Transverse colon (tissue), 4 donors: ENCODE measurements at regions of chr20 and their contacts with region 1.

Region 1: DNA sequence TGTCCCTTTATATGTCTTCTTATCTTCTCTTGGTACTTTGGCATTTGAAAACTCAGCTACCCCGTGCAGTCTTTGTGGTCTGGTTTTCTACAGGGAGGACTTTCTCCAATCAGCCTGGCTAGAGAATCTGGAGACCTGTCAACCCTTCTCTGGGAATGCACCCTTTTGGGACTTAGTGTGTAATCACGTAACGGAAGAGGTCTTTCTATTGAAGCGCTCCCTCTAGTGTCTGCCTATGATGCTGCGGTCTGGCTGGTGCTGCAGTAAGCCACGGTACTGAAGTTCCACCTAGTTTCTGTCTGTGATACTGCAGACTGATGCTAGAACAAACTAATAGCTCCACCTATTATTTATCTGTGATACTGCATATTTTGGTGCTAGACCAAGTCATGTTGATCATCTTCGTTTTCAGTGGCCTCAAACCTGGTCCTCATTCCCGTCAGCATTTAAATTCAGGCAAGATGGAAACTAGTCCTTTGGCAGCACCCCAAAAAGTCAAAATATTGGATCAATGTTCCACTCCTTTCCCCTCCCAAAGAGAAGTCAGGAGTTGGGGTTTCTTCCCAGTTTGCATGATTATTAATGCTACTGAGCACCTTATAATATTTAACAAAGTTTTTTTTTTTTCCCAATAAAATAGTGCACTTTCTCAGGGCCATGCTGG is 12.5 kb upstream of the SIRPB2 start:
- DNase-seq: peak; percentile 77
- H3K4me3 ChIP-seq: no peak overlapping the region
- H3K27ac ChIP-seq: no peak overlapping the region
- H3K4me1 ChIP-seq: no peaks in the 10 kb centered on the region
- H3K27me3 ChIP-seq: peaks cover 9% of the 10 kb centered on the region
- CTCF ChIP-seq: peak; percentile 68 to 91 (median 82)
- EP300 ChIP-seq: no peak
- POLR2A ChIP-seq: no peak

Region 2: DNA sequence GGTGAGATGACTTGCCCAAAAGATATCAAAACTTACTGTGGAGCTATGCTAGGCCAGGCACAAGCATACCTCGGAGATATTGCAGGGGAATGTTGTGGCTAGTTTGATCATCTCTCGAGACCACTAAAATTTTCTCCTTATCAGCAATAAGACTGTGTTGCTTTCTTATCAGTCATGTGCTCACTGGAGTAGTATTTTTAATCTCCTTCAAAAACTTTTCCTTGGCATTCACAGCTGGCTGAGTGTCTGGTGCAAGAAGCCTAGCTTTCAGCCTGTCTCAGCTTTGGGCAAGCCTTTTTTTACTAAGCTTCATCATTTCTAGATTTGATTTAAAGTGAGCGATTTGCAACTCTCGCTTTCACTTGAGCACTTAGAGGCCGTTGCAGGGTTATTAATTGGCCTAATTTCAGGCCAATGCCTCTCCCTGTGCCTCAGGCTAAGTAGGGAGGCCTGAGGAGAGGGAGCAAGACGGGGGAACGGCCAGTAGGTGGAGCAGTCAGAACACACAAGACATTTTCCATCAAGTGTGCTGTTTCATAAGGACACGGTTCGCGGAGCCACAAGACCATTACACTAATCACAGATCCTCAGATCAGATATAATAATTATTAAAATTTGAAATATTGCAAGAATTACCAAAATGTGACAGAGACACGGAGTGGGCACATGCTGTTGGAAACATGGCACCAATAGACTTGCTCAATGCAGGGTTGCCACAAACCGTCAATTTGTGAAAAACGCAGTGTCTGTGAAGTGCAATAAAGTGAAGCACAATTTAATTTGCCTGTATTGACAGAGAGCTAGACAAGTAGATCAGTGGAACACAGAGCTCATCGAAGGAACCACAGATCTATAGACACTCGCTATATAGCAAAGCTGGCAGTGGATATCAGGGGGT is 260.7 kb after region 1 on chr20:
- in situ Hi-C with region 1: loop called in 1 of 4 experiments (anchors 25 kb)
- intact Hi-C with region 1: no loop called
- DNase-seq: peak; percentile 80
- H3K4me3 ChIP-seq: no peak overlapping the region
- H3K27ac ChIP-seq: no peak overlapping the region
- H3K4me1 ChIP-seq: peaks cover 0 to 3% (median 0%) of the 10 kb centered on the region in 4 donors
- H3K27me3 ChIP-seq: peaks cover 6% of the 10 kb centered on the region
- CTCF ChIP-seq: peak; percentile 49 to 74 (median 71)
- EP300 ChIP-seq: no peak
- POLR2A ChIP-seq: no peak